BJ (cell line): ENCODE measurements at regions of chr2 and their contacts with region 1.

Region 1: GRCh38 chr2:85551698-85552678 is 9.3 kb downstream of the GGCX start:
- DNase-seq: no peak
- H3K4me3 ChIP-seq: no peak overlapping the region
- H3K27me3 ChIP-seq: no peaks in the 10 kb centered on the region
- CTCF ChIP-seq: peak; percentile 89

Region 2: DNA sequence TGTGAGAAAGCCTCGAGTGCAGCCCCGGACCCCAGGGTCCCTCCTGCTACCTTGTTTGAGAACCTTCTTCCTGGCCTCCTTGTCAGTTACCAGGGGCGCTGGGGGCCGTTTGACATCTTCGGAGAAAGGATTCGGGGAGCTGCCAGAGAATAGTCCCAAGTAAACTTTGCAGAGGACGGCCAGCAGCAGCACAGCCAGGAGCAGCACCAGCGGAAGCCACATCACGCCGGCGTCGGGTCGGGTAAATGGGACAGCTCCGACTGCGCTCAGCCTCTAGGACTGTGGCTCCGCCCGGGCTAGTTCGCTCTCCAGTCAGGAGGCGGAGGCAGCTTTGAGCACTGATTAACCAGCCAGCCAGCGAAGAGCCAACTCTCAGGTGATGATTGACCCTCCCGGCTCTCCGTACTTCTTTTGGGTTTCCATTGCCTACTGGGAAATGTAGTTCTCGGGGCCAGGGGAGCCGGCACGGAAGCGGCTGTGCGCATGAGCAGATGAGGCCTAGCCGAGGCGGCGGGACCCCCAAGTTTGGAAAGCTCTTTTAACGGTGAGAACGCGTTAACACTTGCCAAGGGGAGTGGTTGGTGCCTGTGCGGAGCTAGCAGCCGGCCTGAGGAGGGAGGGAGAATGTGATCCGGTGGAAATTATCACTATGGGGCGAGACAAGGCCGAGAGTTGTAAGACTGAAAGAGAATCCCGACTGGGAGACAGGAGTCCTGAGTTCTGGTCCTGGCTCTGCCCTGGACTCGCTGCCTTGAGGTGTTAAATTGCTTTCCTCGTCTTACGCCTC is 197.5 kb before region 1 on chr2 and contains the starts of genes ELMOD3 and RETSAT:
- CTCF ChIA-PET with region 1: interaction called, 11 read pairs
- POLR2A ChIA-PET with region 1: no interaction called
- DNase-seq: peak; percentile 92
- H3K4me3 ChIP-seq: peak within 1 kb of the TSS; percentile 82
- H3K27me3 ChIP-seq: no peaks in the 10 kb centered on the region
- CTCF ChIP-seq: no peak
- polyA plus RNA-seq, gene ELMOD3: 22.4 and 26.3 TPM in 2 replicates
- polyA plus RNA-seq, gene RETSAT: 50.3 and 54.4 TPM in 2 replicates

Region 3: GRCh38 chr2:85390941-85391669 is 160.9 kb before region 1 on chr2:
- CTCF ChIA-PET with region 1: interaction called, 15 read pairs
- POLR2A ChIA-PET with region 1: interaction called, 3 read pairs
- DNase-seq: no peak
- H3K4me3 ChIP-seq: no peak overlapping the region
- H3K27me3 ChIP-seq: no peaks in the 10 kb centered on the region
- CTCF ChIP-seq: peak; percentile 70

Region 4: DNA sequence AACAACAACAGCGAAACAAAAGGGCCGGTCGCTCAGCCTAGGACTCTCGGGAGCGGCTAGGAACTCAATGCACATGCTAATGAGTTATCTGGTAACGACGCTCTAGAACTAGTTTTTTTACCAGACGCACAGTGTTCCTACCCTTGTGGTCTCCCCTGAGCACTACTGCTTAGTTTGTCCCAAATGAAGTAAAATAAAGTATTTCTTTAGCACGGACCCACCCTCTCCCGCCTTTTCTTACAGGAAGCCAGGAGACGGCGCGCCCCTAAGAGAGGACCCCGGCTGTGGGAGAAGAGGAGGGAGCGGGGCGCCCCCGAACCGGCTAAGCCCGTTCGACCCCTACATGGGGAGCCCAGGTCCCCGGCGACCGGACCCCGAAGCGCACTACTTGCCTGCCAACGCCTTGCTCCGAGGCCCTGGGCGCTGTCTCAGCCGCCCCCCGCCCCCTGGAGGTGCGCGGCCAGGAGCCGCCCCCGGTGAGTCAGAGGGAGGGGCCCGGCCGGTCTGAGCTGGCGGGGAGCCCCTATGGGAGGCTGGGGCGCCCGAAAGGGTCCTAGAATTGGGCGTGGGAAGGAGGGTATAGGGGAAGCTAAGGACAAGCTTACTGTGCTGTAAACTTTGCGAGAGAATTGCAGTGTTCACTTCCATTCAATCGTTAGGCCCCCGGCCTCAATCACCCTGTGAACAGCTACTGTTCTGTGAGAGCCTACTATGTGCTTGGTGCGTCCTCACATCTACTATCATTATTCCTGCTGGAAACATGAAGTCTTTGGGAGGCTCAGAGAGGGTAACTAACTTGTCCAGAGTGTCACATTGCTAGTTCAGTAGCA is 138.2 kb before region 1 on chr2:
- CTCF ChIA-PET with region 1: interaction called, 460 read pairs
- POLR2A ChIA-PET with region 1: no interaction called
- DNase-seq: no peak
- H3K4me3 ChIP-seq: peak overlapping the region; percentile 55
- H3K27me3 ChIP-seq: no peaks in the 10 kb centered on the region
- CTCF ChIP-seq: no peak

Region 5: GRCh38 chr2:85538486-85539360 is 13.3 kb before region 1 on chr2 and contains the start of gene MAT2A:
- CTCF ChIA-PET with region 1: interaction called, 77 read pairs
- POLR2A ChIA-PET with region 1: interaction called, 4 read pairs
- DNase-seq: no peak
- H3K4me3 ChIP-seq: peak within 1 kb of the TSS; percentile 98
- H3K27me3 ChIP-seq: no peaks in the 10 kb centered on the region
- CTCF ChIP-seq: peak; percentile 83
- polyA plus RNA-seq, gene MAT2A: 261 and 302 TPM in 2 replicates